CD4-positive, alpha-beta memory T cell (primary cell): ENCODE measurements at regions of chr17 and their contacts with region 1.

Region 1: DNA sequence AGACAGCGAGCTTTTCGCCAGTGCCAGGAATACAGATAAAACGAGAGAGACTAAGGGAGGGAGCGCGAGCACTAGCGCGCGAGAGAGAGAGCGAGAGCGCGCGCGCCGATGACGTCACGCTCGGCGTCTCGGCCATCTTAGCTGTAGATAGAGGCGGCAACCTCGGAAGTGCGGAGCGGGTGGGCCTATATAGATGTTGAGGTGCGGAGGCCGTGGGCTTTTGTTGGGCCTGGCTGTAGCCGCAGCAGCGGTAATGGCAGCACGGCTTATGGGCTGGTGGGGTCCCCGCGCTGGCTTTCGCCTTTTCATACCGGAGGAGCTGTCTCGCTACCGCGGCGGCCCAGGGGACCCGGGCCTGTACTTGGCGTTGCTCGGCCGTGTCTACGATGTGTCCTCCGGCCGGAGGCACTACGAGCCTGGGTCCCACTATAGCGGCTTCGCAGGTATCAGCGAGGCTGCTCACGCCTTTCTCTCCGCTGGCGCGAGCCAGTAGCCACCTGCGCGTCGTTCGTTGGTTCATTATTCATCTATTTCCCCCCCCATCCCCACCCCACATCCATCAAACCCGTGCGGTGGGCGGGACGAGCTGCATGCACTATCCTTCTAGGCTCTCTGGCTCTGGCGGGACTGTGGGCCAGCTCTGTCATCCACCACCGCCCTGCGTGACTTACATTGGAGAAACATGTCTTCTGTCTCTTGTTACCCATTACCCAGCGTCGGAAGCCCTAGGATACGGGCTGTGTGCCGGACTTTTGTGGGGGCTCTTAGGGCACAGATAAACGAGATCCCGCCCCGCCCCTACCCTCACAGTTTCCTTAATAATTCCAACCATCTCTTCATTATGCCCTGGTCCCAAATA is 795 bp downstream of the CYB5D2 start:
- DNase-seq: peak; percentile 89 to 94 (median 93)
- H3K4me3 ChIP-seq: peak overlapping the region; percentile 40 to 96
- H3K4me3 Mint-ChIP-seq: peak overlapping the region; percentile 99 to 100 (median 99)
- H3K27ac ChIP-seq: peak overlapping the region; percentile 100
- H3K27ac Mint-ChIP-seq: peak overlapping the region; percentile 100
- H3K4me1 ChIP-seq: peaks cover 49% of the 10 kb centered on the region
- H3K4me1 Mint-ChIP-seq: peaks cover 33 to 66% (median 46%) of the 10 kb centered on the region in 4 donors
- H3K27me3 ChIP-seq: no peaks in the 10 kb centered on the region
- H3K27me3 Mint-ChIP-seq: no peaks in the 10 kb centered on the region

Region 2: DNA sequence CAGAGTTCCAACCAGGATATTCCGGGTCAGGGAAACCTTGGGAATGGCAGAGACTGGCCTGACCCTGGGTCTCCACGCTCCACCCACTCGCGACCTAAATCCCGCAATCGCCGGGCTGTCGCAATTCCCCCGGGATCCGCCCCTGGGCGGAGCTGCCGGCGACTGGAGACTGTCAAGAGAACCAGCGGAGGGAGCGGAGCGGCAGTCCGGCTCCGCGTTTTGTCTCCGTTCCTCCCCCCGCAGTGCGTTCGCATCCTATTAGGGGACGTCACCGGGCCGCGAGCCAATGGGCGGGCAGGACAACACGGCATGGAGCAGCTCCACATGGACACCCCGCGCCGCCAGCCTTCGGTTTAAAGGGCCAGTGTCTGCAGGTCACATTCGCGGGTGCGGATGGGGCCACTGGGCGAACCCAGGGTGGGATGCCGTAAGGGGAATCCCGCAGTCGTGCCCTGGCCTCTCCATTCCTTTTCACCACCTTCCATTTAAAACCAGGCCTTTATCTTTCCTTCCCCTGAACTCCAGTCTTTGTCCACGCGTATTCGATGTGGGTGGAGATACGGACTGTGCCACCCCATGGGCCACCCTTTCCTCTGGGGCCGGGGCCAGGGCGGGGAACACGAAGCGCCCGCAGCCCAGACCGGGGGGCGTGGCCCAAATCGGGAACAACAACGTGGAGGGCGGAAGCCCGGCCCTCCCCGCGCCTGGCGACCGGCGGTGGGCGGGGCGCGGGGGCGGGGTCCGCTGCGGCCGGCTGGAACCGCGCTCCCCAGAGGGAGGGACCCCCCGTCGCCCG is 1742.2 kb before region 1 on chr17:
- CTCF ChIA-PET with region 1: no interaction called
- POLR2A ChIA-PET with region 1: no interaction called
- intact Hi-C with region 1: loop called (anchors 2 kb)
- DNase-seq: peak; percentile 99 to 100 (median 100)
- H3K4me3 ChIP-seq: peak overlapping the region; percentile 65 to 89
- H3K4me3 Mint-ChIP-seq: peak overlapping the region; percentile 90 to 100 (median 98)
- H3K27ac ChIP-seq: peak overlapping the region; percentile 95
- H3K27ac Mint-ChIP-seq: peak overlapping the region; percentile 99 to 100 (median 100)
- H3K4me1 ChIP-seq: peaks cover 35% of the 10 kb centered on the region
- H3K4me1 Mint-ChIP-seq: peaks cover 18 to 54% (median 33%) of the 10 kb centered on the region in 4 donors
- H3K27me3 ChIP-seq: no peaks in the 10 kb centered on the region
- H3K27me3 Mint-ChIP-seq: peaks cover 0 to 8% of the 10 kb centered on the region in 2 donors

Region 3: DNA sequence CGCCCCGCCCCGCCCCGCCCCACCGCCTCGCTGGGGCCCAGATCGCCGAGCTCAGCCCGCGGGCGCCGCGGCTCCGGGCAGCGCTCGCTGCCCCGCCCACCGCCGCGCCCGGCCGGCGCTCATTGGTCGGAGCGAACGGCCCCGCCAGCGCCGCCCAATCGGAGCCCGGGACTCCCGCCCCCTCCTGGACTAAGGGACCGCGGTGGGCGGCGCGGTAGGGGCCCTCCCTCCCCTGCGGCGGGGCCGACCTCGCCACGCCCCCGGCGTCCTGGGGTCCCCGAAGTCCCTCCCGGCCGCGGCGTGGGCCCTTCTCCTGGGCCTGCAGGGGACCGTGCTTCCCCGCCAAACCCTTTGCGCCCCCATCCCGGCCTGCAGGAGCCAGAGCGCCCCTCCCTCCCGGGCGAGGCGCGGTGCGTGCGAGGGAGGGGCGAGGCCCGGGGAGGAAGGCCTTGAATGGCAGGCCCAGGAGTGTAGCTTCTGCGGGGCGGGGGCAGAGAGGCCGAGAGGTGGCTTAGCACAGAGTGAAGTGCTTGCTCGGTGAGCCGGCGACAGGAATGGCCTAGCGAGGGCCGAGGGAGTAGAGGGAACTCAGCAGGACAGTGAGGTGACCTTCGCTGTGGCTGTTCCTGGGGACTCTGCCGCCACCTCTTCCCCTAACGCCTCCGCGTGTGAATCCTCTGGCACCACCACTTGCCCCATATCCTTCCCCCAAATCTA is 250.6 kb before region 1 on chr17 and contains the start of gene CAMKK1:
- CTCF ChIA-PET with region 1: no interaction called
- POLR2A ChIA-PET with region 1: interaction called, 4 read pairs
- intact Hi-C with region 1: loop called (anchors 1 kb)
- DNase-seq: peak; percentile 85 to 91 (median 86)
- H3K4me3 ChIP-seq: peak within 1 kb of the TSS; percentile 36 to 65
- H3K4me3 Mint-ChIP-seq: peak within 1 kb of the TSS; percentile 84 to 89 (median 87)
- H3K27ac ChIP-seq: peak within 1 kb of the TSS; percentile 55
- H3K27ac Mint-ChIP-seq: peak within 1 kb of the TSS; percentile 87 to 96 (median 91)
- H3K4me1 ChIP-seq: peaks cover 21% of the 10 kb centered on the region
- H3K4me1 Mint-ChIP-seq: peaks cover 22 to 46% (median 26%) of the 10 kb centered on the region in 4 donors
- H3K27me3 ChIP-seq: no peaks in the 10 kb centered on the region
- H3K27me3 Mint-ChIP-seq: no peaks in the 10 kb centered on the region
- total RNA-seq, gene CAMKK1: 3.5 TPM

Region 4: DNA sequence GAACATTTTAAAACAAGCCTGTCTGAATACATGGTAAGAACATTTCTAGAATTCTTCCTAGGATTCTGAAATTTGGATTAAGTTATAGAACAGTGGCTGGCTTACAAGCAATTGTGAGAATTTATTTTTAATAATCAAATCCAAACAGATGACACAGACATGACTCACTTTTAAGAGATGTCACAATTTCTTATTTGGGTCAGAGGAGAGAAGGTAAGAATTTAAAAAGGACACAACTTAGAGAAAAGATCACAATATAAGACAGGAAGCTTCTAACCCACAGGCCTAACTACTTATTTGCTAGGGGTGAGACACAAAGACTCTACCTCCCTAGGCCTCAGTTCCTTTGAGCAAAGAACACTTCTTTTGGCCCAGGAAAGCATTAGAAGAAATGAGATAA is 33.6 kb before region 1 on chr17:
- CTCF ChIA-PET with region 1: no interaction called
- POLR2A ChIA-PET with region 1: interaction called, 18 read pairs
- intact Hi-C with region 1: no loop called
- DNase-seq: peak in 2 of 5 donors; percentile 9 to 26
- H3K4me3 ChIP-seq: no peak overlapping the region
- H3K4me3 Mint-ChIP-seq: peak overlapping the region in 4 of 8 donors; percentile 26 to 67 (median 50)
- H3K27ac ChIP-seq: no peak overlapping the region
- H3K27ac Mint-ChIP-seq: peak overlapping the region; percentile 62 to 93 (median 82)
- H3K4me1 ChIP-seq: peaks cover 38% of the 10 kb centered on the region
- H3K4me1 Mint-ChIP-seq: peaks cover 25 to 41% (median 30%) of the 10 kb centered on the region in 4 donors
- H3K27me3 ChIP-seq: no peaks in the 10 kb centered on the region
- H3K27me3 Mint-ChIP-seq: no peaks in the 10 kb centered on the region

Region 5: DNA sequence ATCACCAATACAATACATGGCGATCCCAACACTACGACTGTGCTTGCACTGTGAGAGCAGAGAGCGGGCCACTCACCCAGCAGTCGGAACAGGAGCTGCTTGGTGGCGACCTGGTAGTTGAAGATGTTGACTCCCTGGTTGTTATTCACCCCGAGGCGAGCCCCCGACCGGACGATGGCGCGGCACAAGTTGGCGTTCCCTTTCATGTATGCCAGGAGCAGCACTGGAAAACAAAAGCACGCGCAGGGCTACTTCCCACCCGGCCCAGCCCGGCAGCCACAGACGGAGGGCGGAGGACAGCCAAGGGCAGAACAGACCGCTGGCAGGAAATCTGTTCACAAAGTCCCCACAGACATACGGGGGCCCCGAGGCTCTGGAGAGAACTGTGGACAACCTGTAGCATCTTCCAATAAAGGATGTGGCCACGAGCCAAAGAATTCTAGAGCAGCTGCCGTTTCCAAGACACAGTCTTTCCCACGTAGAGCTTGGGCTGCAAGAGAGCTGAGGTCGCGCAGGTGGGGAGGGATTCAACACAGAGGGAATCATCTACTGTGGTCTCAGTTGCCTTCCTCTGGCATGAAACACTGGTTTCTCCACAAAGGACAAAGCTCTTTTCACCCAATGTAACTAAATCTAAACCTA is 27.0 kb after region 1 on chr17:
- CTCF ChIA-PET with region 1: interaction called, 5 read pairs
- POLR2A ChIA-PET with region 1: interaction called, 121 read pairs
- intact Hi-C with region 1: no loop called
- DNase-seq: no peak
- H3K4me3 ChIP-seq: no peak overlapping the region
- H3K4me3 Mint-ChIP-seq: no peak overlapping the region
- H3K27ac ChIP-seq: no peak overlapping the region
- H3K27ac Mint-ChIP-seq: peak overlapping the region in 3 of 7 donors; percentile 31 to 52 (median 42)
- H3K4me1 ChIP-seq: peaks cover 27% of the 10 kb centered on the region
- H3K4me1 Mint-ChIP-seq: peaks cover 19 to 33% (median 24%) of the 10 kb centered on the region in 4 donors
- H3K27me3 ChIP-seq: no peaks in the 10 kb centered on the region
- H3K27me3 Mint-ChIP-seq: no peaks in the 10 kb centered on the region

Region 6: DNA sequence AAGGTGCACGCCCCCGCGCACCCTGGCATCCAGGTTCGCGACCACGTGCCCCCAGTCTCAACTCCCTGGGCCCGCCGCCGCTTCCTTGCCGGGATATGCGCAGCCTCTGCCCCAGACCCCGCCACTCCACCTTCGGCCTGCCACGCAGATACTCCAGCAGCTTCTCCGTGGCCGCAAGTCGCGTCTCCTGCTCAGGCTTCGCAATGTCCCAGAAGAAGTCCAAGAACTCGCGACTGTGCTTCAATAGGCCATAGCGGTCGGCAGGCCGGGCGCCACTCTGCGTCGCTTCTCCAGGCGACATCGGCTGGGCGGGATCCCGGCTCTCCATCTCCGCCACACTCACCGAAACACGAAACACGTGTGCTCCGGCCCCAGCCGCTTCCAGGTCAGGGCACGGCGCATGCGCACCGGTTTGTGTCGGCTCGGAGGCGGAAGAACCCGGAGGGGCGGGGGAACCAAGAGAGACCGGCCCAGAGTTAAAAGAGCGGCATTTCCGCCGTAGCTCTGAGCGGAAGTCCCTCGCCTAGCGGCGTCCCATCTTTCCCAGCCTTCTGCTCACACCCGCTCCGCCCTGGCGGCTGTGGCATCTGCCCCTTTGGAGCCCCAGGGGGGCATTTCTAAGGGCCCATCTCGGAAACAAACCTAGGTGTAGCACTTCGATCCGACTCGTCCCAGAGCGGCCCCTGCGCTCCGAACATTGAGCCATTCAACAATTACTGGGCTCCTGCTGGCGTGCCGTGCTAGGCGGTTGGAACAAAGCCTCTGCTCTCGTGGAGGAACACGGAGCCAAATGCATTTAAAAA is 411.4 kb after region 1 on chr17 and contains the start of gene MYBBP1A:
- CTCF ChIA-PET with region 1: no interaction called
- POLR2A ChIA-PET with region 1: interaction called, 11 read pairs
- intact Hi-C with region 1: no loop called
- DNase-seq: peak; percentile 95
- H3K4me3 ChIP-seq: peak within 1 kb of the TSS; percentile 62 to 98
- H3K4me3 Mint-ChIP-seq: peak within 1 kb of the TSS; percentile 93 to 97 (median 96)
- H3K27ac ChIP-seq: peak within 1 kb of the TSS; percentile 74
- H3K27ac Mint-ChIP-seq: peak within 1 kb of the TSS; percentile 90 to 99 (median 97)
- H3K4me1 ChIP-seq: peaks cover 24% of the 10 kb centered on the region
- H3K4me1 Mint-ChIP-seq: peaks cover 16 to 32% (median 24%) of the 10 kb centered on the region in 4 donors
- H3K27me3 ChIP-seq: no peaks in the 10 kb centered on the region
- H3K27me3 Mint-ChIP-seq: no peaks in the 10 kb centered on the region
- total RNA-seq, gene MYBBP1A: 73.4 to 74.7 TPM